Vagina (tissue), 2 donors: ENCODE measurements at regions of chr3 and their contacts with region 1.

Region 1: DNA sequence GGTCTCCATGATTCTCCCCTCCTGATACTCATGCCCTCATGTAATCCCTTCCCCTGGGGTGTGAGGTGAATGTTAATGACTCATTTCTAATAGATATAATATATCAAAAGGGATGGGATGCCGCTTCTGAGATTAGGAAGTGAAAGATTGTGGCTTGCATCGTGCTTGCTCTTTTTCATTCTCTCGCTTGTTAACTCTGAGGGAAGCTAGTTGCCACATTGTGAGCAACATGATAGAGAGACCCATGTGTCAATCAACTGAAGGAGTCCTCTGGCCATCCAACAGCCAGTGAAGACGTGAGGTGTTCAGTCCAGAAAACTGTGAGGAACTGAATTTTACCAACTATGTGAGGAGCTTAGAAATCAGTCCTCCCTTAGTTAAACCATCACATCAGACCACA is 28.9 kb upstream of the DRD3 start:
- DNase-seq: no peak
- H3K4me3 ChIP-seq: no peak overlapping the region
- H3K27ac ChIP-seq: no peak overlapping the region
- H3K4me1 ChIP-seq: no peaks in the 10 kb centered on the region
- H3K27me3 ChIP-seq: no peaks in the 10 kb centered on the region
- CTCF ChIP-seq: no peak
- POLR2A ChIP-seq: no peak

Region 2: DNA sequence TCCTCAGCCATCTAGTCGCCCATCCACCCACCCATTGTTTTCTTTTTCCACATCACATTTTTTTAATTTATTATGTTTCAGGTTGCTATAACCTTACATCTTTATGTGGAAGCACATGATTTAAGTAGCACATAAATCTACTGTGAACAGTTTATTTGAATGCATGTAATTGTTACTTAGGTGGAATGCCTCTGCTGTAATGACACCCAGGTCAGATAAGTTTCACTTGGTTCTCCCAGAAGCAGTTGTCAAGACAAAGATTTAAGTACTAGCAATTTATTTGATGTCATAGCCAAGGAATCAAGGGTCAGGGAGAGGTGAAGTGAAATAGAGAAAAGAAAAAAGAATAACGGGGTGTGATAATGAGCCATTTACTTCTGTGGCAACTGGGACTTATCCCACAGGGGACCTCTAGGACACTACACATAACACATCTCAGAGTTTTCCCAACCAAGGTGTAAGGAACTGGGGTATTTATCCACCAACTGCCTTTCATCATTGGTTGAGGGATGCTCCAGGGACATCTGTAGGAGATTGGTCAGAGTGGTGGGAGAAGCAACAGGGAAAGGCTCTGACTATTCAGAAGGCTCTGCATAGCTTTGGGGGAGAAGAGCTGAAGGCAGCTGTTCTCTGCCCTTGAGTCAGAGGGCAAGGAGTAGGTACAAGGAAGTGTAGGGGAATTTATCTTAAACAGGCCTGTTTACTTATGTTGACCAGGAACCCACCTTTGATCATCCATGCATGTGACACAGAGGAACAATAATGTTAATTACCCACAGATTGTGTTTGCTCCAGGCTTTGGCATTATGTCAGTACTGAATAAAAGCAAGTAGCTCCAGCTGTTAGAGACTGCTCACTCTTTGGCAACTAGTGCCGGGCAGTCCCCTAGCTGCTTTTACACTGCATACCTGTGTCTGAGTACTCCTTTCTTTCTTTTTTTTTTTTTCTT is 1455.9 kb before region 1 on chr3:
- intact Hi-C with region 1: loop called (anchors 10 kb)
- DNase-seq: no peak
- H3K4me3 ChIP-seq: no peak overlapping the region
- H3K27ac ChIP-seq: no peak overlapping the region
- H3K4me1 ChIP-seq: peaks cover 12% of the 10 kb centered on the region
- H3K27me3 ChIP-seq: no peaks in the 10 kb centered on the region
- CTCF ChIP-seq: no peak
- POLR2A ChIP-seq: no peak

Region 3: DNA sequence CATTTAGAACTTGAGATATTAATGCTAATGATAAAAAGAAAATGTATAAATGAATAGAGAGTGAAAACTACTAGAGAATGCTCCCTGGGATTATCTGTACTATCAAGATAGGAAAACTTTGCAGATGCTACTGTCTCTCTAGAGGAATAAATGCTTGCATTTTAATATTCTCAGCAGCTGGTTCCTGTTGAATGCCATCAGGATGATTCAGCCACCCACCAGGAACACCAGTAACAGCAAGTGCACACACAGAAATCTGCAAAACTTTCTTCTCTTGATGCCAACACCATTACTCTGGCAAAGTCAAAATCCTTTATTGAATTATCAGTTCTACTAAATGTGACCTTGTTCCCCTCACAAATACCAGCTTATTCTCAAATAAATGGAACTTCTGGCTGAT is 234.5 kb after region 1 on chr3:
- intact Hi-C with region 1: no loop called
- DNase-seq: no peak
- H3K4me3 ChIP-seq: no peak overlapping the region
- H3K27ac ChIP-seq: no peak overlapping the region
- H3K4me1 ChIP-seq: peaks cover 43% of the 10 kb centered on the region
- H3K27me3 ChIP-seq: no peaks in the 10 kb centered on the region
- CTCF ChIP-seq: no peak
- POLR2A ChIP-seq: no peak